Endothelial cell of umbilical vein (primary cell): ENCODE measurements at regions of chr19 and their contacts with region 1.

Region 1: DNA sequence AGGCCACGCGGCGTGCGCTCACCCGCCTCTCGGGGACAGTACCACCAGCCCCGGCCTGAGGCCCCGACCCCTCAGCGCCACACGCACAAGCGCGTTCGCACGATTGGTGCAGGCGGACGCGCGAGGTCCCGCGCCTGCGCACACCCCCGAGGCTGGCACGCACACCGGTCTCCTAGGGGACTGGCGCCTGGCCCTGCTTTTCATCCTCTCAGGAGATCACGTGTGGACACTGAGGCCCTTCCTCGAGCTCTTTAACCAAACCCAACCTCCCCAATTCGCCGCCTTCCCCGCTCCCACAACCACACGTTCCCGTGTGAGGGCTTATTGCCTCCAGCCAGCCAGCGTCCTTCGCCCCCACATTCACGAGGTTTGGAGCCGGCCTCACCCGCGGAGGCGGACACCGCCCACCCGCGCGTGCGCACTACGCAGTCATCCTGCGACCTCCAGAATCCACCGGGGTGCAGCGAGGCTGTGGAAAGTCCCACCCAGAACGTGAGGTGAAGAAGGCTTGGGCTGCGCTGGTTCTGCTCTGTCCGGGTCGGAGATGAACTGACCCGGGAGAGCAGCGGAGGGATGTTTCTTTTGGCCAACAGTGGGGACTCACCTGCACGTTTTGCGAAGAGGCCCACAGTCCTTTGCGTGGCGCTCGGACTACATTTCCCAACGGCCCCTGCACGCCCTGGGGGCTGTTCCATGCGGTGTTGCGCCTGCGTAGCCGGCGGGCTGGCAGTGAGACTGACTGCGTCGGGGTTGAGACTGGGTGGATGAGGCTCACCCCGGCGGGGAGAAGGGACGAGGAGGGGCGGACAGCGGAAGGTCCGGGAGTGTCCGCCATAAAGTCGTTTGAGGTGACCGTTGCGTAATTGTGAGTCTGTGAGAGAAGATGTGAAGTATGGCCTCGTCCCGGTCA is 539 bp upstream of the ZNF667 start:
- DNase-seq: peak; percentile 82
- H3K4me3 ChIP-seq: peak overlapping the region in 2 of 3 experiments; percentile 54 to 65
- H3K27ac ChIP-seq: no peak overlapping the region
- H3K4me1 ChIP-seq: no peaks in the 10 kb centered on the region
- H3K27me3 ChIP-seq: no peaks in the 10 kb centered on the region
- CTCF ChIP-seq: no peak
- POLR2A ChIP-seq: no peak

Region 2: DNA sequence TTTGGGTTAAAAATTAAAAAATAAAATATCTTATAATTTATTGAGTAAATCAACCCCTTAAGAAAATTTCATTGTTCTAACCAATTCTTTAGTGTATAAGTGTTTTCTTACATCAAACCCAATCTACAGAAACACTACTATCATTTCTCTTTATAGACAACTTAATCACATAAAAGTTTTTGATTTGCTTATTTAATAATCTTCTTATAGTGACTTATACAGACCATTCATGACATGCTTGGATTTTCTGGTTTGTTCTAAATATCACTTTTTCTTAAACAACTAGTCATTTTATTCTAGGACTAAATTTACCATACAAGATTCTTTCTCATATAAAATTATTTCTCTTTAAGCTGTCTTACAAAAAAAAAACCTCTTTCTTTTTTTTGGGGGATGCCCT is 135.7 kb before region 1 on chr19:
- CTCF ChIA-PET with region 1: no interaction called
- POLR2A ChIA-PET with region 1: no interaction called
- dilution Hi-C with region 1: no loop called
- intact Hi-C with region 1: no loop called
- DNase-seq: no peak
- H3K4me3 ChIP-seq: no peak overlapping the region
- H3K27ac ChIP-seq: no peak overlapping the region
- H3K4me1 ChIP-seq: no peaks in the 10 kb centered on the region
- H3K27me3 ChIP-seq: no peaks in the 10 kb centered on the region
- CTCF ChIP-seq: no peak
- POLR2A ChIP-seq: no peak

Region 3: DNA sequence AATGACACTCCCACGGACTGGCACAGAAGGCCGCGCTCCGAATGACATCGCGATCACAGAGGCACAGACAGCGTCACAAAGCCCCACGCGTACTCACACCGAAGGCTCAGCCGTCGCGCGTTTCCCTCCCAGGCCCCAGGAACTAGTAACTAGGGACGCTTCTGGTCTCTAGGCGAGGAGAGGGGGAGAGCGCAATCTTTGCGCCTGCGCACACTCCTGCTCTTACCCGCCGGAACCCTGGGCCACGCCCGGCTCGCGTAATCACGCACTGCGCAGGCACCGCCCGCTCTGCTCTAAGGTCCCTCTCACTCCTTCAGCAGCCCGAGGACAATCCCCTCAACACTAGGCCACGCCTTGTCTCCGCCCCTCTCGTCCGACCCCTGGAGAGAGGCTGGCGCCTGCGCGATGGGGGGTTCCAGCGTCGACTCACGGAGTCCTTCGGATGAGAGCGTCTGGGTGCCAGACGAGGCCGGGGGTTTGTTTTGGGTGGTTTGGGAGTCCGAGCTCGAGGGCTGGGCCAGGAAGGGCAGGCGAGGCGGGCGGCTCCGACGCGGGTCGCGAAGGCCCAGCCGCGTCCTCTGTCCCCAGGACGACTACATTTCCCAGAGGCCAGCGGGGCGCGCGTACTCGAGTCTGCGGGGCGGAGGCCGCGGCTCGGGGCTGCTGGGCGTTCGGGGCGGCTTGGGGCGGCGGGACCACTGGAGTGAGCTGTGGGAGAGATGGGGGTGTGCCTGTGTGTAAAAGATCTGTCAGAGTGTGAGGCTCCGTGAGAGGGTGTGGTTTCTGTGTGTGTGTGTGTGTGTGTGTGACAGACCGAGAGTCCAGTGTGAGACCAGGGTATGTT is 30.0 kb after region 1 on chr19 and contains the start of gene ZNF471:
- CTCF ChIA-PET with region 1: no interaction called
- POLR2A ChIA-PET with region 1: no interaction called
- dilution Hi-C with region 1: no loop called
- intact Hi-C with region 1: loop called (anchors 1 kb)
- DNase-seq: peak; percentile 99
- H3K4me3 ChIP-seq: peak within 1 kb of the TSS; percentile 44 to 78 (median 61)
- H3K27ac ChIP-seq: peak within 1 kb of the TSS; percentile 70
- H3K4me1 ChIP-seq: peaks cover 3% of the 10 kb centered on the region
- H3K27me3 ChIP-seq: no peaks in the 10 kb centered on the region
- CTCF ChIP-seq: no peak
- POLR2A ChIP-seq: no peak
- total RNA-seq, gene ZNF471: 2.0 and 3.1 TPM in 2 replicates

Region 4: DNA sequence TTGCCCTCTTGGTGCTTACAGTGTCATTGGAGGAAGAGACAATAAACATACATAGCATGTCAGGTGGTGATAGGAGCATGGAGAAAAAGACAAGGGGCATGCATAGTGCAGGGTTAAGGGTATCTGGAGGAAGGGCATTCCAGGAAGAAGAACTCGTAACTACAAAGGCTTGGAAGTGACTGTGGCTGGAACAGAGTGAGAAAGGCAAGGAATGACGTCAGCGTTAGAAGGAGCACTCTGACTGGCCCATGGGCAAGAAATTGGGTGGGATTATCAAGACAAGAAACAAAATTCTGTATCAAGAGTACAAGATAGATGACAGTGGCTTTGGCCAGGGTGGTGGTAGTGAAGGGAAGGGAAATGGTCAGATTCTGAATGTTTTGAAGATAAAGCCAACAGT is 176.5 kb after region 1 on chr19:
- CTCF ChIA-PET with region 1: no interaction called
- POLR2A ChIA-PET with region 1: no interaction called
- dilution Hi-C with region 1: no loop called
- intact Hi-C with region 1: no loop called
- DNase-seq: no peak
- H3K4me3 ChIP-seq: no peak overlapping the region
- H3K27ac ChIP-seq: no peak overlapping the region
- H3K4me1 ChIP-seq: no peaks in the 10 kb centered on the region
- H3K27me3 ChIP-seq: no peaks in the 10 kb centered on the region
- CTCF ChIP-seq: no peak
- POLR2A ChIP-seq: no peak